ENCODE measurements at regions of chr11 and their contacts with region 1.

Region 1: DNA sequence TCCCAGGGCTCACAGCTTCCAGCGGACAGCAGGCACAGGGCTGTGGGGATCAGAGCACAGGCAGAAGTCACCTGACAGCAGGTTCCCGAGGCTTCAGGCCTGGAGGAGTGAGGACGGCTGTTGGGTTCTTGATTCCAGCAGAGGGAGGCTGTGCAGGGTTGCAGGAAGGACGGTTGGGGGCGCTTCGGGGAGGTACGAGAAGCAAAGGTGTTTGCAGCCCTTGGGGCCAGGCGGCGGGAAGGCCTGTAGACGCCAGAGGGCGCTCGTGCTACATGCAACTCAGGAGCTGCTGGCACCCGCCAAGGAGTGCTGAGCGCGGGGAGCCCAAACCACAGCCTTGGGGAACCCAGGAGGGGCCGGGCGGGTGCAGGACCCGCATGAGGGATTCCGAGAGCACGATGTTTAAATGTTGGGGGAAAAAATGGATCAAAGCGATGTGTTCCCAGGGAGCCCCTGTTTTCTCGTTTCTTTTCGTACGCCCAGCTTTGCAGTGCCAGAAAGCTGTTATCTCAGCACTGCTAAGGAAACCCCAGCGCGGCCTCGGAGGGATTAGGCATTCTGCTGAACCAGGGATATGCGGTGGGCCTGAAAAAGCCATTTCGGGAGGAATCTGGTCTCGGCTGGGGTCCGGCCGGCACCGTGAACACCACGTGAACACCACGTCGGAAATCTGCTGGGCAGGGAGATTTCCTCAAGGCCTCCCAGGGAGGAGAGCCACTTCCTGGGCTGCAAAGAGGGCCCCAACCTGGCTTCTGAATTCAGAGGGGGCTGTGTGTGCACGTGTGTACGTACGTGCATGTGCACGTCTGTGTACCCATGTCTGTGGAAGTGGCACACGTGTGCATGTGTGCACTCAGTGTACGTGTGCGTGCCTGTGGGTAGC is 88.1 kb downstream of the KCNQ1 start:
- DNase-seq: peak; percentile 95
- H3K4me3 ChIP-seq: peak overlapping the region in 3 of 4 donors; percentile 13 to 38 (median 32)
- H3K27ac ChIP-seq: peak overlapping the region in 2 of 4 donors; percentile 2 to 64
- H3K4me1 ChIP-seq: peaks cover 0 to 21% (median 17%) of the 10 kb centered on the region in 4 donors
- H3K27me3 ChIP-seq: peaks cover 0 to 3% (median 0%) of the 10 kb centered on the region in 3 donors
- CTCF ChIP-seq: peak; percentile 99 to 100 (median 99)
- EP300 ChIP-seq: no peak
- POLR2A ChIP-seq: no peak

Region 2: DNA sequence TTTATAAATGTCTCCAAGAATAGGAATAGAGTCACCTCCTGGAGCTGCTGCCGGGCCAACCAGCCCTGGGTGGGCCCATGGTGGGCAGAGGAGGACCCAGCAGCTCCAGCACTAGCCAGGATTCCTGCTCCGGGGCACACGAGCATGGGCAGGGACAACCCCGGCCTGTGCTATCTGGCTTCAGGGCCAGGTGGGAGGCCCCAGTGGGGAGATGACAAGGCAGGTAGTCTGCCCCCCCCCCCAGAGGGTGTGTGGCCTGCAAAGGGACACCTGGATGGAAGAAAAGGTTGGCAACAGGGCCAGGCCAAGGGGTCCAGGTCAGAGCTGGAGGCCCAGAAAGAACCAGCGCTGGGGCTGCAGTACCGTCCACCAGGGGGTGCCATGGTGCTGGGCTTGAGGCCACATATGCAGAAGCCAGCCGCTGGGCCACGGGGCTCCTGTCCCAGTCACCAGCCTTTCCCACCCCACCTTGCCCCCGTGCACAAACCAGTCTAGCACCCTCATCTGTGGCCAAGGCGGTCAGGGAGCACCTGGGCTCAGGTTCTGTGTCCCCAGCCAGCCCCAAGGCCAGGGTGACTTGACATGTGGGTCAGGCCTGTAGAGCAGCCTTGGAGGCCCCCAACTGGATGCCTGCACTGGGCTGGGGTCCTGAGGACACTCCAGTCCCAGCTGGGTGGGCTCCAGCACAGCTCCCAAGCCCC is 227.7 kb before region 1 on chr11:
- intact Hi-C with region 1: loop called (anchors 5 kb)
- DNase-seq: peak; percentile 95
- H3K4me3 ChIP-seq: peak overlapping the region in 1 of 4 donors; percentile 23
- H3K27ac ChIP-seq: peak overlapping the region; percentile 87 to 94 (median 92)
- H3K4me1 ChIP-seq: peaks cover 0 to 62% (median 52%) of the 10 kb centered on the region in 4 donors
- H3K27me3 ChIP-seq: no peaks in the 10 kb centered on the region
- CTCF ChIP-seq: peak; percentile 91 to 98 (median 94)
- EP300 ChIP-seq: no peak
- POLR2A ChIP-seq: no peak

Region 3: GRCh38 chr11:2708151-2708581 is 175.2 kb after region 1 on chr11:
- intact Hi-C with region 1: loop called (anchors 5 kb)
- DNase-seq: peak; percentile 87
- H3K4me3 ChIP-seq: peak overlapping the region in 3 of 4 donors; percentile 18 to 28 (median 28)
- H3K27ac ChIP-seq: peak overlapping the region; percentile 78 to 87 (median 84)
- H3K4me1 ChIP-seq: peaks cover 0 to 35% (median 26%) of the 10 kb centered on the region in 4 donors
- H3K27me3 ChIP-seq: no peaks in the 10 kb centered on the region
- CTCF ChIP-seq: no peak
- EP300 ChIP-seq: no peak
- POLR2A ChIP-seq: no peak

Region 4: DNA sequence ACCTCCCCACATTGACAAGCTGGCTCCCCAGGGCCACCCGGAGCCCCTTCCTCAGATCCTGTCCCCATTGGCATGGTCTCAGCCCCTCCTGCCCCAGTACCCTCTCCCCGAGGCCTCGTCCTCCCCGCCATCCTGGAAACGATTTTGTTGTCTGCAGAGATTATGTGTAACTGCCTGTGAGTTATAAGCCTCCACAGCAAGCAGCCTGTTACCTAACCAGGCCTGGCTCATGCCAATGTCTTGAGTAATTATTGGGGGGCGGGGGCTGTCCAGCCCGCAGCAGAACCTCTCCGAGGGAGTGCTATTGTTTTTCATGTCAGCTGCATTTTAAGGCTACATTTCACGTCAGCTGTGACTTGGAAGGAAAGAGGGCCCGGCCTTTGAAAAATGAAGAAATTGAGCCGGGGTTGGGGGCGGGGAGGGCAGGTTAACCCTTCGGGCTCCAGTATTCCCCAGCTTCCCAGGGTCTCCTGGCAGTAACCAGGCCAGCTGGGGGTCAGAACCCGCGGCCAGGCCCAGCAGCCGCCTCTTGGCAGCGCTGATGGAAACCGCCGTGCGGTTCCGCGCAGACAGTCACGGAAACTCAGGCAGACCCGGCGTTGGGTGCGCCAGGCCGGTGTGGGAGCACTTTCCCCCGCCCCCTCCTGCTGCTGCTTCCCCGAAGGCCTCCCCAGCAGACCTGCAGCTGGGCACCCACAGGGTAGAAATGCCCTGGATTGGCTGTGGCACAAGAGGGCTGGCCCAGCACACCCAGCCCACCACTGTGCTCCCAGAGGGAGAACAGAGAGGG is 293.1 kb after region 1 on chr11:
- intact Hi-C with region 1: loop called (anchors 5 kb)
- DNase-seq: peak; percentile 96
- H3K4me3 ChIP-seq: peak overlapping the region in 3 of 4 donors; percentile 4 to 30 (median 9)
- H3K27ac ChIP-seq: peak overlapping the region; percentile 88 to 97 (median 92)
- H3K4me1 ChIP-seq: peaks cover 0 to 42% (median 31%) of the 10 kb centered on the region in 4 donors
- H3K27me3 ChIP-seq: no peaks in the 10 kb centered on the region
- CTCF ChIP-seq: no peak
- EP300 ChIP-seq: peak in 1 of 4 donors; percentile 65
- POLR2A ChIP-seq: no peak